Activated CD4-positive, alpha-beta T cell treated with anti-CD3 and anti-CD28 coated beads, Interleukin-2, amount 10 ng/mL, durations not matched to agents 24 days and 14 days (primary cell): ENCODE measurements at regions of chr4 and their contacts with region 1.

Region 1: DNA sequence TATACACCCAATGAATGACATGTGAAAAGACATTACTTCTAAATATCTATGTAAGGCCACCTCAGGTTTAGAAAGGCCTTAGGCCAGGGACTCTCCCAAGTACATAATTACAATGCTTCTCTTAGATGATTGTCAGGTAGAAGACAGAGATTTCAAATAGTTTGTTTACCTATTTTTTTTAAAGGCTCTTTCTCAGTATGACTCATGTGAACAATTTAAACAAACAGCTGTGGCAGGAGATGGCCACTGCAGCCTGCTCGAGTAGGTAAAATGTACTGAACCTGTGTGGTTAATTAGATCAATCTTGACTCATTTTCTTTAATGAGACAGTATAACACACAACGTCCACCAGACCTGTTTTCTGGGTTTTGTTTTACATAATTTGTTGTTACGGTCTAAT is 50.2 kb downstream of the LEF1 start:
- DNase-seq: peak; percentile 82
- H3K4me3 Mint-ChIP-seq: peak overlapping the region; percentile 66
- H3K27ac Mint-ChIP-seq: peak overlapping the region; percentile 91
- H3K4me1 Mint-ChIP-seq: peaks cover 82% of the 10 kb centered on the region
- H3K27me3 Mint-ChIP-seq: no peaks in the 10 kb centered on the region

Region 2: DNA sequence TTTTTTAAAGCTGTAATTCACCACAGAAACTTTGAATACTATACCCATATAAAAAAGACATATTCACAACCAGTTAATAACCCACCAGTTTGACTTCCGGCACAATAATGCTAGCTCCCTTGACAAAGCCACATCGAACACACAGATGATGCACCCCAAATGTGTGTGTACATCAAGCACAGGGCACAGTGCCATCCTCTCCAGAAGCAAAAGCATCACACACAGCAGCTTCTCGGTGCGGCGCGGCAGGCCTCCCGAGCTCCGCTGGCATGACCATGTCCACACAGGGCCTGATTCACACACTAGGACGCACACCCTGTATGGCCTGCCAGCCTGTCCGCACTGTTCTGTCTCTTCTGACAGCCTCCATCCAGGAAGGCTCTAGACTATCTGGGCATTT is 37.7 kb before region 1 on chr4:
- intact Hi-C with region 1: no loop called
- DNase-seq: peak; percentile 76
- H3K4me3 Mint-ChIP-seq: peak overlapping the region; percentile 74
- H3K27ac Mint-ChIP-seq: peak overlapping the region; percentile 78
- H3K4me1 Mint-ChIP-seq: peaks cover 41% of the 10 kb centered on the region
- H3K27me3 Mint-ChIP-seq: no peaks in the 10 kb centered on the region

Region 3: DNA sequence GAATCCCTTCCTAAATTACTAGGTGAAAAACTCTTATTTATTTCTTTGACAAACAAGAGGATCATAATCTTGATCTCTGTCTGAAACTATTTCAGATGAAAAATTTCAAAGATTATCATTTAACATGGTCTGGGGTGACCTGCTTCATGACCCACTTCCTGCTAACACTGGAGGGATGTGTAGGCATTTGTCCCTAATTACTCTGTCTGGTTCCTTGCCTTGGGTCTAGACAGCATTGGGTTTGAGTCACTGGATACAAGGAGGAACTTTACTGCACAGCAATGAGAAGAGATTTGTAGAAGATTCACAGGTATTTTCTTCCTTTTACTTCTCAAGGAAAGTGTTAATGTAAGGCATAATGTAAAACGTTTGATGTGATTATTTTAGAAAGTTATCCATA is 17.7 kb before region 1 on chr4:
- intact Hi-C with region 1: loop called (anchors 2 kb)
- DNase-seq: no peak
- H3K4me3 Mint-ChIP-seq: peak overlapping the region; percentile 20
- H3K27ac Mint-ChIP-seq: peak overlapping the region; percentile 30
- H3K4me1 Mint-ChIP-seq: peaks cover 76% of the 10 kb centered on the region
- H3K27me3 Mint-ChIP-seq: no peaks in the 10 kb centered on the region

Region 4: DNA sequence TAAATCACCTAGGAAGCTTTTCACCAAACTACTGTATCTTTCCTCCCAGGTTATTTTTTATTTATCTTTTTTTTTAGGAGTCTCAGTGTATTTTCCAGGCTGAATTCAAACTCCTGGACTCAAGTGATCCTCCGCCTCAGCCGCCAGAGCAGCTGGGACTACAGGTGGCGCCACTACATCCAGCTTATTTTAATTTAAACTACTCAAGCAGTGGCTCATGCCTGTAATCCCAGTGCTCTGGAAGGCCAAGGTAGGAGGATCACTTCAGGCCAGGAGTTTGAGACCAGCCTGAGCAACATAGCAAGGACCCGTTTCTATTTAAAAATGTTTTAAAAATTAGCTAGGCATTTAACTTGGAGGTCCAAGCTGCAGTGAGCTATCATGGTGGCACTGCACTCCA is 12.5 kb after region 1 on chr4:
- intact Hi-C with region 1: loop called (anchors 1 kb)
- DNase-seq: peak; percentile 55
- H3K4me3 Mint-ChIP-seq: no peak overlapping the region
- H3K27ac Mint-ChIP-seq: no peak overlapping the region
- H3K4me1 Mint-ChIP-seq: peaks cover 69% of the 10 kb centered on the region
- H3K27me3 Mint-ChIP-seq: no peaks in the 10 kb centered on the region

Region 5: GRCh38 chr4:108139089-108139488 is 20.6 kb after region 1 on chr4:
- intact Hi-C with region 1: loop called (anchors 1 kb)
- DNase-seq: peak; percentile 58
- H3K4me3 Mint-ChIP-seq: peak overlapping the region; percentile 84
- H3K27ac Mint-ChIP-seq: peak overlapping the region; percentile 97
- H3K4me1 Mint-ChIP-seq: peaks cover 84% of the 10 kb centered on the region
- H3K27me3 Mint-ChIP-seq: no peaks in the 10 kb centered on the region

Region 6: GRCh38 chr4:108166441-108167315 is 48.2 kb after region 1 on chr4:
- intact Hi-C with region 1: loop called (anchors 1 kb)
- DNase-seq: peak; percentile 90
- H3K4me3 Mint-ChIP-seq: peak overlapping the region; percentile 97
- H3K27ac Mint-ChIP-seq: peak overlapping the region; percentile 94
- H3K4me1 Mint-ChIP-seq: peaks cover 55% of the 10 kb centered on the region
- H3K27me3 Mint-ChIP-seq: peaks cover 14% of the 10 kb centered on the region